ENCODE measurements at regions of chr17 and their contacts with region 1.

Region 1: DNA sequence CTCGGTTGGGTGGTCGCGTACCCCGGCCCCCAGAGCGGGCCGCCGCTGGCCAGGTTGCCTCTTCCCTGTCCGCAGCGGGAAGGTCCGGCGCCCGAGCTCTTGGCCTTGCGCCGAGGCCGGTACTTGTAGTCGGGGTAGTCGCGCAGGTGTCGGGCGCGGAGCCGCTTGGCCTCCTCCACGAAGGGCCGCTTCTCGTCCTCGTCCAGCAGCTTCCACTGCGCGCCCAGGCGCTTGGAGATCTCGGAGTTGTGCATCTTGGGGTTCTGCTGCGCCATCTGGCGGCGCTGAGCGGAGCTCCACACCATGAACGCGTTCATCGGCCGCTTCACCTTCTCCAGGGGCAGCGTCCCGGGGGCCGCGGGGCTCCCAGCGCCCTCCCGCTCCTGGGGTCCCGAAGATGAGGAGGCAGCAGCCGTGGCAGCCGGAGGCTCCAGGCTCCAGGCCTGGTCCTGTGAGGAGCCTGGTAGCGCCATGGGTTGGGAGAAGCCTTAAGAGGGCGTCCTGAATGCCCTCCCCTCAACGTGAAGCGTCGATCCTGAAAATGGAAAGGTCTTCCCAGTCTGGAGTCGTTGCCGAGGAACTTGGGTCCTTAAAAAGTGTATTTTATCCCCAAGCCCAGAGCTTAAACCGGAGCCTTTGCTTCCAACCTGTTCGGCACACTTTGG is 558 bp downstream of the SOX15 start:
- DNase-seq: peak; percentile 83
- H3K4me3 ChIP-seq: peak overlapping the region; percentile 69 to 82 (median 69)
- H3K27ac ChIP-seq: peak overlapping the region; percentile 77
- H3K4me1 ChIP-seq: peaks cover 54% of the 10 kb centered on the region
- H3K27me3 ChIP-seq: no peaks in the 10 kb centered on the region
- CTCF ChIP-seq: peak; percentile 68 to 92

Region 2: GRCh38 chr17:7060165-7060891 is 529.0 kb before region 1 on chr17:
- CTCF ChIA-PET with region 1: no interaction called
- dilution Hi-C with region 1: no loop called
- in situ Hi-C with region 1: no loop called
- intact Hi-C with region 1: no loop called
- DNase-seq: peak; percentile 99
- H3K4me3 ChIP-seq: no peak overlapping the region
- H3K27ac ChIP-seq: peak overlapping the region; percentile 55
- H3K4me1 ChIP-seq: peaks cover 27% of the 10 kb centered on the region
- H3K27me3 ChIP-seq: no peaks in the 10 kb centered on the region
- CTCF ChIP-seq: no peak

Region 3: GRCh38 chr17:7444682-7445618 is 144.4 kb before region 1 on chr17 and contains the start of gene CHRNB1:
- CTCF ChIA-PET with region 1: no interaction called
- dilution Hi-C with region 1: no loop called
- in situ Hi-C with region 1: no loop called
- intact Hi-C with region 1: loop called (anchors 2 kb)
- DNase-seq: no peak
- H3K4me3 ChIP-seq: peak within 1 kb of the TSS; percentile 39 to 50 (median 43)
- H3K27ac ChIP-seq: peak within 1 kb of the TSS; percentile 80
- H3K4me1 ChIP-seq: peaks cover 40% of the 10 kb centered on the region
- H3K27me3 ChIP-seq: no peaks in the 10 kb centered on the region
- CTCF ChIP-seq: no peak
- total RNA-seq, gene CHRNB1: 30.2 to 35.4 TPM

Region 4: DNA sequence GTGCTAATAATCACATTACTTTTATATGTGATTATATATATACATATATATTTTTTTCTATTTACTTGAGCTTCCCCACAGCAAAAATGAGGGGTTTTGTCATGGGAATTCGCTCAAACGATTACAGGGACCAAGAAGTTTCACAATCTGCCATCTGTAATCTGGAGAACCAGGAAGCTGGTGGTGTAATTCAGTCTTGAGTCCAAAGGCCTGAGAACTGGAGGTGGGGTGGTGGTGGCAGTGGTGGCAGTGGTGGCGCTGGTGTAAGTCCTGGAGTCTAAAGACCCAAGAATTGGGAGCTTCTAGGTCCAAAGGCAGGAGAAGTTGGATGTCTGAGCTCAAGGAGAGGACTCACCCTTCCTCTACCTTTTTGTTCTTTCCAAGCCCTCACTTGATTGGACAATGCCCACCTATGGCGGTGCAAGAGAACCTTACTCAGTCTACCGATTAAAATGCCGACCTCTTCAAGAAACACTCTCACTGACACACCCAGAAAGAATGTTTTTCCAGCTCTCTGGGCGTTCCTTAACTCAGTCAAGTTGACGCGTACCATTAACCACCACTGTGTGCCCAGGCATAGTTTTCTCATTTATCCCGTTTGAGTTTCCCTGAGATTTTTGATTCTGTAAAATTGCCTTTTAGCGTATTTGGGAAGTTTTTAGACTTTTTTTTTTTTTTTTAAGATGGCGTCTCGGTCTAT is 73.3 kb before region 1 on chr17:
- CTCF ChIA-PET with region 1: no interaction called
- dilution Hi-C with region 1: no loop called
- in situ Hi-C with region 1: no loop called
- intact Hi-C with region 1: loop called (anchors 1 kb)
- DNase-seq: no peak
- H3K4me3 ChIP-seq: no peak overlapping the region
- H3K27ac ChIP-seq: no peak overlapping the region
- H3K4me1 ChIP-seq: no peaks in the 10 kb centered on the region
- H3K27me3 ChIP-seq: no peaks in the 10 kb centered on the region
- CTCF ChIP-seq: no peak

Region 5: GRCh38 chr17:7572588-7573323 is 16.6 kb before region 1 on chr17:
- CTCF ChIA-PET with region 1: no interaction called
- dilution Hi-C with region 1: no loop called
- in situ Hi-C with region 1: no loop called
- intact Hi-C with region 1: loop called (anchors 1 kb)
- DNase-seq: peak; percentile 99
- H3K4me3 ChIP-seq: peak overlapping the region; percentile 95 to 98 (median 98)
- H3K27ac ChIP-seq: peak overlapping the region; percentile 95
- H3K4me1 ChIP-seq: peaks cover 38% of the 10 kb centered on the region
- H3K27me3 ChIP-seq: no peaks in the 10 kb centered on the region
- CTCF ChIP-seq: no peak

Region 6: DNA sequence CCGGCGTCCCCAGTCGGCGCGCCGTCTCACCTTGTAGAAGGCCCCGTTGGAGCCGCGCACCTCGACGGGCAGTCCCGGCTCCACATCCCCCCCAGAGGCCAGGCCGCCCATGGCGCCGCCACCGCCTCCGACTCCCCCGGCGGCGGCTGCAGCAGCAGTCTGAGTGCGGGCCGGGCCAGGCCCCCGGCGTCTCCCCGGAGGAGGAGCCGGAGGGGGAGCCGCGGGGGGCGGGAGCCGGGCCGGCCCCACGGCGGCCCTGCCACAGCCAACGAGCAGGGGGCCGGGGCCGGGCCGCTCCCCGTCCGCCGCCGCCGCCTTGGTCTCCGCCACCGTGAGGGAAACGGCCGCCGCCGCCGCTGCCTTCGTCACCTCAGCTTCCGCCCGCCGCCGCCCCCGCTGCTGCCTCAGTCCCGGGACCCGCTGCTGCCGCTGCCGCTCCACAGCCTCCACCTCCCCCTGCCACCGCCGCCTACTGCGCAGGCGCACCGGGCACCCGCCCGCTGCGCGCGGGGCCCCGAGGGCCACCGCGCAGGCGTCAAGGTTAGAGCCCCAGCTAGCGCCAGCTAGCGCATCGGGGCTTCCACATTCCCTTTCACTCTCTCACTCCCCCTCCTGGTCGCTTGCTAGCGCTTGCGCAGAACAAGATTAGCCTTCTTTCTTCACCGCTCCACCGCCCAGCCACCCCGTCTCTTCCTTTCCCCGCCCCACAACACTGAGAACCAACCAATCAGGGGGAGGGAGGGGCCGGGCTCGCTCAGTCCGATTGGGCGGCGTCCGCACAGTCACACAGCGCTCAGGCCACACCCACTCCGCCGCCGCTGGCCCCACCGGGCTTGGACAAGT is 25.3 kb after region 1 on chr17 and contains the start of gene FXR2:
- CTCF ChIA-PET with region 1: interaction called, 11 read pairs
- dilution Hi-C with region 1: no loop called
- in situ Hi-C with region 1: no loop called
- intact Hi-C with region 1: loop called (anchors 2 kb)
- DNase-seq: peak; percentile 100
- H3K4me3 ChIP-seq: peak within 1 kb of the TSS; percentile 63 to 100 (median 94)
- H3K27ac ChIP-seq: peak within 1 kb of the TSS; percentile 81
- H3K4me1 ChIP-seq: peaks cover 21% of the 10 kb centered on the region
- H3K27me3 ChIP-seq: no peaks in the 10 kb centered on the region
- CTCF ChIP-seq: peak; percentile 38 to 74
- total RNA-seq, gene FXR2: 37.2 to 53.3 TPM

Region 7: DNA sequence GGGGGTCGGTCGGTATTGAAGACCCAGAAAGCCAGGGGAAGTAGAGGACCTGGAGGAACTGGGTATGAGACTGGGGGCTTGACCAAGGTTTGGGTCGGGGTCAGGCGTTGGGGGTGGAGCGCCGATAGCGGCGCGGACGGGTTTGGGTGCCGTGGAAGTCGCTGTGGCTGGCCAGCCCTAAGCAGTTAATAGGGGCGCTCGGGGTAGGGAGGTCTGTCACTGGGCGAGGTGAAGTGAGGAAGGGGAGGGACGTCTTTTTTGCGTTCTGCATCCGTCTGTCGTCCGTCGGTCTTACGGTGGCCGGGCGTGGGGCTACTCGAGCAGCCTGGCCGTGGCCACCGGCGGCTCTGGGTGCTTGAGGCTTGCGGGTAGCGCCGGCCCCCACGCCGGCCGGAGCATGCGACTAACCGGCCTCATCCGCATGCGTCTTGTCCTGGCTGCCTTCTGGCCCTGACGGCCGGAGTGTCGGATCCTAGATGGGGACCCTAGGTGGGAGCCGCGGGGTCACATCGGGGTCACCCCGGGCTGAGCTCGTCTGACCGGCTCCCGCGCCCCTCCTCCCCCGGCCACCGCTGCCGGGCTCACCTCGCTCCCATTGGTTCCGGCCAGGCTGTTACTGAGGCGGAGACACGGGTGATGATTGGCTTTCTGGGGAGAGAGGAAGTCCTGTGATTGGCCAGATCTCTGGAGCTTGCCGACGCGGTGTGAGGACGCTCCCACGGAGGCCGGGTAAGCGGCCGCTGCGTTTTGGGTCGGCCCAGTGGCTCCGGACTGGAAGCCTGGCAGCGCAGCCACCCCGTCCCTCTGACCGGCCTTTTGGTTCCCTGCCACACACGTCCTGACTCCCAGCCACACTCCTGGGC is 255.2 kb after region 1 on chr17:
- CTCF ChIA-PET with region 1: no interaction called
- dilution Hi-C with region 1: no loop called
- in situ Hi-C with region 1: no loop called
- intact Hi-C with region 1: loop called (anchors 5 kb)
- DNase-seq: peak; percentile 94
- H3K4me3 ChIP-seq: peak overlapping the region; percentile 60 to 75 (median 71)
- H3K27ac ChIP-seq: peak overlapping the region; percentile 96
- H3K4me1 ChIP-seq: peaks cover 26% of the 10 kb centered on the region
- H3K27me3 ChIP-seq: no peaks in the 10 kb centered on the region
- CTCF ChIP-seq: no peak

Measured in mammary epithelial cell (primary cell).